Activated CD4-positive, alpha-beta T cell treated with anti-CD3 and anti-CD28 coated beads, Interleukin-2, amount 10 ng/mL, durations not matched to agents 24 days and 14 days (primary cell): ENCODE measurements at regions of chr1 and their contacts with region 1.

Region 1: DNA sequence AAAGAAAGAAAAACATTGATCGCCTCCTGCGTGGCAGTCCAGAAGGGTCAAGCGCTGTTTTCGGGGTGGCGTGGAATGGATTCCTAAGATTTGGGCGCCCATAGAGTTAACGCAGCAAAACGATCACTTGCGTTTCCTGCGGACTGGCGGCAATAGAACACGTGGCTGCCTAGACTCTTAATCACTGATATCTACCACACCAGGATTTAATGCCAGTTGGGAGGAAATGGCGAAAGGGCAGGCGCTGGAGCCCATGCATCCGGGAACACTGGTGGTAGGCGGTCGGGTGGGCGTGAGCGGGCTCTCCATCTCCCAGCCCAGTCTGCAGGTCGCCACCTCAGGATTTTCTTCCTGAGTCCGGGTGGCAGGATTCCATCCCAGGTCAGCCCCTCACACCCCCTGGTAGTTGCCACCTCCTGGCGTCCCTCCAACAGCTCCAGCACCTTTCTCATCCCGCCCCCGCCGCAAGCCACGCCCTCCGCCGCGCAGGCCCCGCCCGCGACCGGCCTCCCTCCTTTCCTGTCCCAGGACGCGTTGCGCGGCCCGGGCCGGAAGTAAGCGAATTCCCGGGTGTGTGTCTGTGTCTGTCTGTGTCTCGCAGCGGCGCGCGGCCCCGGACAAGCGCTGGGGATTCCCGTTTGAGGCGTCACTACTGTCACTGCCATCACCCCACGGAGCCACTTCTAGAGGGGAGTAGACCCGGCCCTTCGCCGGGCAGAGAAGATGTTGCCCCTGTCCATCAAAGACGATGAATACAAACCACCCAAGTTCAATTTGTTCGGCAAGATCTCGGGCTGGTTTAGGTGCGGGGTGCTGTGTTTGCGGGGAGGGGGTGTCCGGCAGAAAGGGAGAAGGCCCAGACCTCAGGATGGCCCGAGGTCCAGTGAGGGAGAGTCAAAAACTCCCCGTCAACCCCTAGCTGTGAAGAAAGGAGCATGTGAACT is at the start of gene SLC30A7:
- DNase-seq: peak; percentile 99
- H3K4me3 Mint-ChIP-seq: peak within 1 kb of the TSS; percentile 100
- H3K27ac Mint-ChIP-seq: peak within 1 kb of the TSS; percentile 100
- H3K4me1 Mint-ChIP-seq: peaks cover 36% of the 10 kb centered on the region
- H3K27me3 Mint-ChIP-seq: no peaks in the 10 kb centered on the region
- total RNA-seq, gene SLC30A7: 40.8 and 41.0 TPM in 2 replicates

Region 2: DNA sequence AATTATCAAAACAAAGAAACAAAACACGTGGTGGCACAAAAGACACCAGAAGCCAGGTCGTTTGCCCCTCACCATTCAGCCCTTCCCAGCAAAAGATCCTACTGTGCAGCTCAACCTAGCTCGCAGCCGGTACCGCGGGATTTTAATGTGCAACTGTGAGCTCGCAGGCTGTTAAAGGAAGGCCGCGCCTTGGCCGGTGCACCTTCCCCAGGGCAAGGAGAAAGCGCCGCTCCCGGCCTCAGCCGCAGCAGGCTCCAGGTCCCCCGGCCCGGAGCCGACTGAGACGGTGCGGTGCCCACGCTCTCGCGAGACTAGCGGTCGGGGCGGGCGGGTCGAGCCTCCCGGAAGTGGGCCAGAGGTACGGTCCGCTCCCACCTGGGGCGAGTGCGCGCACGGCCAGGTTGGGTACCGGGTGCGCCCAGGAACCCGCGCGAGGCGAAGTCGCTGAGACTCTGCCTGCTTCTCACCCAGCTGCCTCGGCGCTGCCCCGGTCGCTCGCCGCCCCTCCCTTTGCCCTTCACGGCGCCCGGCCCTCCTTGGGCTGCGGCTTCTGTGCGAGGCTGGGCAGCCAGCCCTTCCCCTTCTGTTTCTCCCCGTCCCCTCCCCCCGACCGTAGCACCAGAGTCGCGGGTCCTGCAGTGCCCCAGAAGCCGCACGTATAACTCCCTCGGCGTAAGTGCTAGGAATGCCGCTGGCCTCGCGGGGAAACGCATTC is 1045.9 kb before region 1 on chr1 and contains the start of gene AGL:
- intact Hi-C with region 1: loop called (anchors 1 kb)
- DNase-seq: peak; percentile 96
- H3K4me3 Mint-ChIP-seq: peak within 1 kb of the TSS; percentile 97
- H3K27ac Mint-ChIP-seq: peak within 1 kb of the TSS; percentile 90
- H3K4me1 Mint-ChIP-seq: peaks cover 15% of the 10 kb centered on the region
- H3K27me3 Mint-ChIP-seq: peaks cover 5% of the 10 kb centered on the region
- total RNA-seq, gene AGL: 12.9 and 13.7 TPM in 2 replicates

Region 3: DNA sequence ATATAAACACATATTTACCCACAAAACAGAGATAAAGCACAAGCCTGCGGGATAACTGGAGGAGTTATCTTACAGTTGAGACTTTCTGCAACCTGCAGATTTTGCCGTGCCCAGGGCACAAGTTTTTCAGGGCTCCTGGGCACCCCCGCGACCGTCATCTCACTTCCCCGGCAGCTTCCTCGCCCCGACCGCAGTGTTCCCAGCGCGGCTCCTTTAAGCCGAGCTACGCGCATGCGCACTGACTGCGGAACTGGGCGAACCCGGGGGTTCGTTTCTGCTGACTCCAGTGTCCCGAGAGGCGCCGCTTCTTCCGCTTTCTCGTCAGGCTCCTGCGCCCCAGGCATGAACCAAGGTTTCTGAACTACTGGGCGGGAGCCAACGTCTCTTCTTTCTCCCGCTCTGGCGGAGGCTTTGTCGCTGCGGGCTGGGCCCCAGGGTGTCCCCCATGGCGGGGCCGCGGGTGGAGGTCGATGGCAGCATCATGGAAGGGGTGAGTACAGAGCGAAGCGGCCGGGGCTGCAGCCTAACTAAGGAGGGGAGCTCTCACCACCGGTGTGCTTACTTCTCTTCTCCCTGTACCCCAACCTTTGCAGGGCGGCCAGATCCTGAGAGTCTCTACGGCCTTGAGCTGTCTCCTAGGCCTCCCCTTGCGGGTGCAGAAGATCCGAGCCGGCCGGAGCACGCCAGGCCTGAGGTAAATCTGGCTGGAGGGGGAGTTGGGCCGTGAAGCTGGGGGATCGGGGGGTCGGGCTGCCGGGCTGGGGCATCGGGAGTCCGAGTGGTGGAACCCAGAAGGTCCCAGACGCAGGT is 629.7 kb before region 1 on chr1 and contains the start of gene RTCA:
- intact Hi-C with region 1: loop called (anchors 2 kb)
- DNase-seq: peak; percentile 99
- H3K4me3 Mint-ChIP-seq: peak within 1 kb of the TSS; percentile 98
- H3K27ac Mint-ChIP-seq: peak within 1 kb of the TSS; percentile 96
- H3K4me1 Mint-ChIP-seq: peaks cover 34% of the 10 kb centered on the region
- H3K27me3 Mint-ChIP-seq: no peaks in the 10 kb centered on the region
- total RNA-seq, gene RTCA: 48.5 and 49.1 TPM in 2 replicates

Region 4: DNA sequence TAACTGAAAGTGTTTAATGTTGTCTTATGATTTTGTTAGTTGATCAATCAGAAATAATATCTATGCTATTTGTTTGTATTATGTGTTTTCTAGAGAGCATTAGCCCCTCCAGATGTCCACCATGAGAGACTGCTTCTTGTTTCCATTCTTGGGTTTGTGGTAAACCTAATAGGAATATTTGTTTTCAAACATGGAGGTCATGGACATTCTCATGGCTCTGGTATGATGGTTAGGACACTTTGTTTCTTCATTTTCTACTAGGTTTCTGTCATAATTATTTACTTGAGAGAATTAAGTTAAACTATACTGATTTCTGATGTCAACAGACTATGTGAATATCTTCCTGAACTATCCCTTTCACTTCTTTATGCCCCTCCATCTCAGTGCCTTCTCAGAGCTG is 16.2 kb after region 1 on chr1:
- intact Hi-C with region 1: no loop called
- DNase-seq: no peak
- H3K4me3 Mint-ChIP-seq: no peak overlapping the region
- H3K27ac Mint-ChIP-seq: no peak overlapping the region
- H3K4me1 Mint-ChIP-seq: peaks cover 12% of the 10 kb centered on the region
- H3K27me3 Mint-ChIP-seq: no peaks in the 10 kb centered on the region

Region 5: GRCh38 chr1:101451888-101452287 is 556.1 kb after region 1 on chr1:
- intact Hi-C with region 1: loop called (anchors 10 kb)
- DNase-seq: peak; percentile 55
- H3K4me3 Mint-ChIP-seq: no peak overlapping the region
- H3K27ac Mint-ChIP-seq: peak overlapping the region; percentile 23
- H3K4me1 Mint-ChIP-seq: peaks cover 29% of the 10 kb centered on the region
- H3K27me3 Mint-ChIP-seq: peaks cover 19% of the 10 kb centered on the region